Heart left ventricle (tissue), 16 donors: ENCODE measurements at regions of chr1 and their contacts with region 1.

Region 1: GRCh38 chr1:95023399-95024043 is 49.2 kb downstream of the ALG14 start:
- DNase-seq: peak in 1 of 5 donors; percentile 19
- ATAC-seq: peak; percentile 50 to 85 (median 68)
- H3K4me3 ChIP-seq: no peak overlapping the region
- H3K27ac ChIP-seq: peak overlapping the region in 10 of 12 donors; percentile 21 to 82 (median 62)
- H3K4me1 ChIP-seq: peaks cover 0 to 39% (median 25%) of the 10 kb centered on the region in 12 donors
- H3K27me3 ChIP-seq: no peaks in the 10 kb centered on the region
- CTCF ChIP-seq: no peak
- POLR2A ChIP-seq: no peak

Region 2: DNA sequence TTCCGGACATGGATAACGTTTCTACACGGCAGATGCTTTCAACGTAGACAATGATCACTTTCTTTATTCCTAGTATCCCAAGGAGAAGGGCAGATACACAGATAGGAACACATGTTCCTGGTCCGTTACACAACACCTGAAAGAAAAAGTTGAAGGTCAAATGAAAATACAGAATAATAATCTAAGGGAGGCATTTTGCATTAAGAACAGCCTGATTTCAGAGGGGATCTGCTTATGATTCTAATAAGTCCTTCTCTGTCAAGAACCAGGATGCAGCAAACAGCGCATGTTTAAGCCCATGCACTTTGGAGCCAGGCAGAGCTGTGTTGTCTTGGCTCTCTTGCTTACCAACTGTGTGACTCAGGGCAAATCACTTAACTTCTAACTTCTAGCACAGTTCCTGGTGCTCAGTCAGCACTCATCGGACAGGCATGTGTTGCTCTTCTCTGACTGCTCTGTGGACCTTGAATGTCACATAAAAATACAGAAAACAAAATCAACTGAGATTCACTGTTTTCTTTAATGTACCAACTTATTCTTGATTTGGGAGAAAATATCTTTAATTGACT is 40.3 kb before region 1 on chr1:
- intact Hi-C with region 1: loop called in 1 of 10 experiments (anchors 5 kb)
- DNase-seq: peak in 1 of 5 donors; percentile 45
- ATAC-seq: peak in 3 of 4 donors; percentile 62 to 85 (median 81)
- H3K4me3 ChIP-seq: peak overlapping the region in 4 of 12 donors; percentile 2 to 25 (median 7)
- H3K27ac ChIP-seq: peak overlapping the region; percentile 12 to 74 (median 52)
- H3K4me1 ChIP-seq: peaks cover 0 to 51% (median 28%) of the 10 kb centered on the region in 12 donors
- H3K27me3 ChIP-seq: no peaks in the 10 kb centered on the region
- CTCF ChIP-seq: no peak
- POLR2A ChIP-seq: no peak